CD8-positive, alpha-beta T cell (primary cell): ENCODE measurements at regions of chr21 and their contacts with region 1.

Region 1: GRCh38 chr21:39313571-39314142 is at the start of gene BRWD1:
- DNase-seq: peak; percentile 69 to 93 (median 80)
- ATAC-seq: peak; percentile 28
- H3K4me3 ChIP-seq: peak within 1 kb of the TSS; percentile 66 to 90
- H3K4me3 Mint-ChIP-seq: peak within 1 kb of the TSS; percentile 90
- H3K27ac ChIP-seq: peak within 1 kb of the TSS; percentile 63 to 70
- H3K27ac Mint-ChIP-seq: peak within 1 kb of the TSS; percentile 90
- H3K4me1 ChIP-seq: peaks cover 21% of the 10 kb centered on the region
- H3K4me1 Mint-ChIP-seq: peaks cover 45% of the 10 kb centered on the region
- H3K27me3 ChIP-seq: no peaks in the 10 kb centered on the region
- H3K27me3 Mint-ChIP-seq: no peaks in the 10 kb centered on the region
- CTCF ChIP-seq: no peak
- total RNA-seq, gene BRWD1: 96.4 to 99.0 TPM

Region 2: GRCh38 chr21:38805328-38806152 is 508.1 kb before region 1 on chr21 and contains the start of gene ETS2:
- CTCF ChIA-PET with region 1: no interaction called
- POLR2A ChIA-PET with region 1: no interaction called
- intact Hi-C with region 1: loop called in 1 of 2 experiments (anchors 2 kb)
- DNase-seq: peak; percentile 33 to 84 (median 63)
- ATAC-seq: peak; percentile 83
- H3K4me3 ChIP-seq: peak within 1 kb of the TSS; percentile 74 to 79
- H3K4me3 Mint-ChIP-seq: peak within 1 kb of the TSS; percentile 84
- H3K27ac ChIP-seq: peak within 1 kb of the TSS; percentile 51 to 59
- H3K27ac Mint-ChIP-seq: peak within 1 kb of the TSS; percentile 73
- H3K4me1 ChIP-seq: peaks cover 8% of the 10 kb centered on the region
- H3K4me1 Mint-ChIP-seq: peaks cover 31% of the 10 kb centered on the region
- H3K27me3 ChIP-seq: no peaks in the 10 kb centered on the region
- H3K27me3 Mint-ChIP-seq: peaks cover 2% of the 10 kb centered on the region
- CTCF ChIP-seq: no peak
- total RNA-seq, gene ETS2: 8.1 to 10.0 TPM

Region 3: GRCh38 chr21:39183237-39184007 is 130.2 kb before region 1 on chr21 and contains the start of gene PSMG1:
- CTCF ChIA-PET with region 1: no interaction called
- POLR2A ChIA-PET with region 1: interaction called, 18 read pairs
- intact Hi-C with region 1: loop called (anchors 1 kb)
- DNase-seq: peak; percentile 86 to 97 (median 93)
- ATAC-seq: peak; percentile 92
- H3K4me3 ChIP-seq: peak within 1 kb of the TSS; percentile 88 to 89
- H3K4me3 Mint-ChIP-seq: peak within 1 kb of the TSS; percentile 97
- H3K27ac ChIP-seq: peak within 1 kb of the TSS; percentile 73 to 91
- H3K27ac Mint-ChIP-seq: peak within 1 kb of the TSS; percentile 94
- H3K4me1 ChIP-seq: peaks cover 27% of the 10 kb centered on the region
- H3K4me1 Mint-ChIP-seq: peaks cover 42% of the 10 kb centered on the region
- H3K27me3 ChIP-seq: no peaks in the 10 kb centered on the region
- H3K27me3 Mint-ChIP-seq: no peaks in the 10 kb centered on the region
- CTCF ChIP-seq: no peak
- total RNA-seq, gene PSMG1: 4.7 to 6.8 TPM

Region 4: GRCh38 chr21:39296891-39297290 is 16.8 kb before region 1 on chr21:
- CTCF ChIA-PET with region 1: no interaction called
- POLR2A ChIA-PET with region 1: interaction called, 20 read pairs
- intact Hi-C with region 1: no loop called
- DNase-seq: no peak
- ATAC-seq: no peak
- H3K4me3 ChIP-seq: no peak overlapping the region
- H3K4me3 Mint-ChIP-seq: no peak overlapping the region
- H3K27ac ChIP-seq: no peak overlapping the region
- H3K27ac Mint-ChIP-seq: peak overlapping the region; percentile 60
- H3K4me1 ChIP-seq: no peaks in the 10 kb centered on the region
- H3K4me1 Mint-ChIP-seq: peaks cover 43% of the 10 kb centered on the region
- H3K27me3 ChIP-seq: no peaks in the 10 kb centered on the region
- H3K27me3 Mint-ChIP-seq: no peaks in the 10 kb centered on the region
- CTCF ChIP-seq: no peak

Region 5: GRCh38 chr21:39349211-39350093 is 35.8 kb after region 1 on chr21:
- CTCF ChIA-PET with region 1: interaction called, 23 read pairs
- POLR2A ChIA-PET with region 1: interaction called, 95 read pairs
- intact Hi-C with region 1: loop called (anchors 1 kb)
- DNase-seq: peak; percentile 91 to 98 (median 97)
- ATAC-seq: peak; percentile 83
- H3K4me3 ChIP-seq: peak overlapping the region; percentile 74 to 75
- H3K4me3 Mint-ChIP-seq: peak overlapping the region; percentile 96
- H3K27ac ChIP-seq: peak overlapping the region; percentile 89 to 95
- H3K27ac Mint-ChIP-seq: peak overlapping the region; percentile 99
- H3K4me1 ChIP-seq: peaks cover 42% of the 10 kb centered on the region
- H3K4me1 Mint-ChIP-seq: peaks cover 38% of the 10 kb centered on the region
- H3K27me3 ChIP-seq: no peaks in the 10 kb centered on the region
- H3K27me3 Mint-ChIP-seq: no peaks in the 10 kb centered on the region
- CTCF ChIP-seq: no peak

Region 6: DNA sequence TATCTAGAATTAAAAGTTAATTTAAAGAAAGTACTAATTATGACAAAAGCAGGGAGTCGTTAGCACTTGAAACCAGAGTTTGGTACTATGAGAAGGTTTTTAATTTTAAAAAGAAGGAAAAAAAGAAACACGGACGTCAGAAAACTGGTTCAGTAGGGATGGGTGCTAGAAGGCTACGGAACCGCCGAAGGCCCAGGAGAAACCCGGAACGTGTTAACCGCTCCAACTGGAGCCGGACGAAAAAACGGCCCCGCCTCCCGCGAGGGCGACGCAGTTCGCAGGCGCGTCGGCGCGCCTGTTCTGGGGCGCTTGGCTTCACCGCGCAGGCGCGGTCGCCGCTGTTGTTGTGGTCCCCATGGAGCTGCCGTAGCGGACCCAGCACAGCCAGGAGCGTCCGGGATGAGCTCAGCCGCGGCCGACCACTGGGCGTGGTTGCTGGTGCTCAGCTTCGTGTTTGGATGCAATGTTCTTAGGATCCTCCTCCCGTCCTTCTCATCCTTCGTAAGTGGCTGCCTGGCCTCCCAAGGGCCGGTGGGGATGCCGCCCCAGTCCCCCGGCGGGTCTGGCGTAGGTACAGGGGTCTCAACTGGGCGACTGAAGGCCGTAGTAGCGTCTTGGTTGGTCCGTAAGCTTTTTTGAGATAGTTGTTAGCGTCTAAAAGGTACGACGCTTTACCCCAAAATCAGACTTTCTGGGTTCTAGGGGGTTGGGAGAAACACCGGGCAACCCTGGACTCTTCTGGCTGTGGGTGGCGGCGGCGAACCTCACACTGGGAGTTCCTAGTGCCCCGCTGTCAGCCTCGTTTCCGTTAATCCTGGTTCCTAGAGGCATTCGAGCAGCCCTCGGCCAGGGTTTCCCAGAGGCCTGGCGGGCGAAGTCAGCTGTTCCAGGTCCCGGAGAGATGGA is 66.6 kb after region 1 on chr21:
- CTCF ChIA-PET with region 1: no interaction called
- POLR2A ChIA-PET with region 1: interaction called, 8 read pairs
- intact Hi-C with region 1: loop called in 1 of 2 experiments (anchors 1 kb)
- DNase-seq: peak; percentile 75 to 95 (median 89)
- ATAC-seq: peak; percentile 97
- H3K4me3 ChIP-seq: peak overlapping the region; percentile 70 to 91
- H3K4me3 Mint-ChIP-seq: peak overlapping the region; percentile 93
- H3K27ac ChIP-seq: peak overlapping the region; percentile 80 to 92
- H3K27ac Mint-ChIP-seq: peak overlapping the region; percentile 93
- H3K4me1 ChIP-seq: peaks cover 12% of the 10 kb centered on the region
- H3K4me1 Mint-ChIP-seq: peaks cover 26% of the 10 kb centered on the region
- H3K27me3 ChIP-seq: peaks cover 0 to 2% of the 10 kb centered on the region in 2 experiments
- H3K27me3 Mint-ChIP-seq: peaks cover 4% of the 10 kb centered on the region
- CTCF ChIP-seq: no peak

Region 7: GRCh38 chr21:39445321-39446269 is 131.9 kb after region 1 on chr21 and contains the start of gene LCA5L:
- CTCF ChIA-PET with region 1: interaction called, 3 read pairs
- POLR2A ChIA-PET with region 1: no interaction called
- intact Hi-C with region 1: loop called (anchors 1 to 2 kb)
- DNase-seq: peak; percentile 73 to 95 (median 87)
- ATAC-seq: peak; percentile 88
- H3K4me3 ChIP-seq: peak within 1 kb of the TSS; percentile 74 to 91
- H3K4me3 Mint-ChIP-seq: peak within 1 kb of the TSS; percentile 97
- H3K27ac ChIP-seq: peak within 1 kb of the TSS; percentile 73 to 84
- H3K27ac Mint-ChIP-seq: peak within 1 kb of the TSS; percentile 95
- H3K4me1 ChIP-seq: peaks cover 5% of the 10 kb centered on the region
- H3K4me1 Mint-ChIP-seq: peaks cover 16% of the 10 kb centered on the region
- H3K27me3 ChIP-seq: no peaks in the 10 kb centered on the region
- H3K27me3 Mint-ChIP-seq: peaks cover 9% of the 10 kb centered on the region
- CTCF ChIP-seq: no peak
- total RNA-seq, gene LCA5L: not detected

Region 8: DNA sequence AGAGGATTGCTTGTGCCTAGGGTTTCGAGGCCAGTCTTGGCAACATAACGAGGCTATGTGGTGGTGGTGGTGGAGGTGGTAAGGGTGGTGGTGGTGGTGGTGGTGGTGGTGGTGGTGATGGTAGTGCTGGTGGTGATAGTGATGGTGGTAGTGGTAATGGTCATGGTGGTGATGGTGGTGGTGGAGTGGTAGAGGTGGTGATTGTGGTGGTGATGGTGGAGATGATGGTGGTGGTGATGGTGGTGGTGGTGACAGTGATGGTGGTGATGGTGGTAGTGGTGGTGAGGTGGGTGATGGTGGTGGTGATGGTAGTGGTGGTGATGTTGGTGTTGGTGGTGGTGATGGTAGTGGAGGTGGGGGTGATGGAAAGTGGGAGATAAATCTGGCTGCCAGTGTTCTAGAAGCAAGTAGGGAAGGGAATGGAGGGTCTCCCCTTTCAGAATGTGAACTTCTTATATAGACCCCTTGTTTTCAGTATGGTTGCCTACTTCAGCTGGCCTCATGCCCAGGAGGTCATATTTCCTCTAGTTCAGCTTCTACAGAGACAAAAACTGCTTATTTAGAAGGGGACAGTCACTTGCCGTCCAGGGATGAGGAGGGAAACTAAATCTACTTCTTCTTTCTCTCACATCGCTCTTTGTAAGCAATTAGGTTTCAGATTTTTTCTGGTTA is 165.6 kb after region 1 on chr21:
- CTCF ChIA-PET with region 1: no interaction called
- POLR2A ChIA-PET with region 1: no interaction called
- intact Hi-C with region 1: no loop called
- DNase-seq: no peak
- ATAC-seq: no peak
- H3K4me3 ChIP-seq: no peak overlapping the region
- H3K4me3 Mint-ChIP-seq: no peak overlapping the region
- H3K27ac ChIP-seq: no peak overlapping the region
- H3K27ac Mint-ChIP-seq: no peak overlapping the region
- H3K4me1 ChIP-seq: no peaks in the 10 kb centered on the region
- H3K4me1 Mint-ChIP-seq: no peaks in the 10 kb centered on the region
- H3K27me3 ChIP-seq: no peaks in the 10 kb centered on the region
- H3K27me3 Mint-ChIP-seq: no peaks in the 10 kb centered on the region
- CTCF ChIP-seq: no peak